ENCODE measurements at regions of chr1 and their contacts with region 1.

Region 1: GRCh38 chr1:76140227-76140626 is 65.7 kb downstream of the ST6GALNAC3 start:
- DNase-seq: no peak
- ATAC-seq: no peak
- H3K4me3 ChIP-seq: no peak overlapping the region
- H3K27ac ChIP-seq: peak overlapping the region; percentile 17 to 68 (median 60)
- H3K4me1 ChIP-seq: peaks cover 0 to 6% of the 10 kb centered on the region in 2 donors
- H3K27me3 ChIP-seq: no peaks in the 10 kb centered on the region
- CTCF ChIP-seq: no peak
- POLR2A ChIP-seq: no peak

Region 2: DNA sequence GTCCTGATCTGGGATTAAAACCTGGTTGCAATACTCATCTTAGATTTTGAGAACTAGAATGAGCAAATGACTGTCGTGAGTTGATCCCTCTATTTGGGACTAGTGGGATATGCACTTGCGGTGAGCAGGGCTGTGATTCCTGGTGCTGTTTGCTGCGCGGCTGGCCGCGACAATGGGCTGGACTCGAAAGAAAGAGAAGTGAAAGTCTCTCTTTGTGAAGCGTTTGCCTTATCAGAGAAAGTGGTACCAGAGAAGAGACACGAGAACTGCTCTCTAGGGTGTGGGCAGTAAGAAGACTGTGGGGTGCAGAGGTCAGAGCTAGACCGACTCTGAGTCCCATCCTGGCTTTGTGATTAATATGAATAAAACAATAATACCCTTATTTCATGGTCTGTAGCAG is 57.0 kb before region 1 on chr1:
- in situ Hi-C with region 1: loop called in 1 of 4 experiments (anchors 10 kb)
- intact Hi-C with region 1: loop called (anchors 5 kb)
- DNase-seq: no peak
- ATAC-seq: no peak
- H3K4me3 ChIP-seq: no peak overlapping the region
- H3K27ac ChIP-seq: no peak overlapping the region
- H3K4me1 ChIP-seq: no peaks in the 10 kb centered on the region
- H3K27me3 ChIP-seq: no peaks in the 10 kb centered on the region
- CTCF ChIP-seq: no peak
- POLR2A ChIP-seq: no peak

Region 3: GRCh38 chr1:76203132-76203531 is 62.9 kb after region 1 on chr1:
- in situ Hi-C with region 1: no loop called
- intact Hi-C with region 1: no loop called
- DNase-seq: no peak
- ATAC-seq: no peak
- H3K4me3 ChIP-seq: no peak overlapping the region
- H3K27ac ChIP-seq: no peak overlapping the region
- H3K4me1 ChIP-seq: no peaks in the 10 kb centered on the region
- H3K27me3 ChIP-seq: no peaks in the 10 kb centered on the region
- CTCF ChIP-seq: no peak
- POLR2A ChIP-seq: no peak

Measured in gastrocnemius medialis (tissue), 4 donors.